Heart left ventricle (tissue), 16 donors: ENCODE measurements at regions of chr11 and their contacts with region 1.

Region 1: GRCh38 chr11:1341928-1342524 is 32.6 kb upstream of the TOLLIP start:
- DNase-seq: peak in 1 of 5 donors; percentile 56
- ATAC-seq: peak in 3 of 4 donors; percentile 70 to 84 (median 81)
- H3K4me3 ChIP-seq: no peak overlapping the region
- H3K27ac ChIP-seq: peak overlapping the region in 3 of 12 donors; percentile 13 to 33 (median 33)
- H3K4me1 ChIP-seq: peaks cover 0 to 13% (median 0%) of the 10 kb centered on the region in 12 donors
- H3K27me3 ChIP-seq: no peaks in the 10 kb centered on the region
- CTCF ChIP-seq: peak in 2 of 12 donors; percentile 4 to 6
- POLR2A ChIP-seq: no peak

Region 2: GRCh38 chr11:1382831-1383607 is 41.0 kb after region 1 on chr11:
- intact Hi-C with region 1: loop called in 2 of 10 experiments (anchors 5 kb)
- DNase-seq: peak; percentile 85 to 89 (median 87)
- ATAC-seq: peak; percentile 70 to 96 (median 91)
- H3K4me3 ChIP-seq: peak overlapping the region; percentile 31 to 69 (median 56)
- H3K27ac ChIP-seq: peak overlapping the region in 11 of 12 donors; percentile 9 to 80 (median 72)
- H3K4me1 ChIP-seq: peaks cover 0 to 13% (median 5%) of the 10 kb centered on the region in 12 donors
- H3K27me3 ChIP-seq: peaks cover 0 to 10% (median 0%) of the 10 kb centered on the region in 9 donors
- CTCF ChIP-seq: no peak
- POLR2A ChIP-seq: no peak